Spleen (tissue), 13 donors: ENCODE measurements at regions of chr5 and their contacts with region 1.

Region 1: DNA sequence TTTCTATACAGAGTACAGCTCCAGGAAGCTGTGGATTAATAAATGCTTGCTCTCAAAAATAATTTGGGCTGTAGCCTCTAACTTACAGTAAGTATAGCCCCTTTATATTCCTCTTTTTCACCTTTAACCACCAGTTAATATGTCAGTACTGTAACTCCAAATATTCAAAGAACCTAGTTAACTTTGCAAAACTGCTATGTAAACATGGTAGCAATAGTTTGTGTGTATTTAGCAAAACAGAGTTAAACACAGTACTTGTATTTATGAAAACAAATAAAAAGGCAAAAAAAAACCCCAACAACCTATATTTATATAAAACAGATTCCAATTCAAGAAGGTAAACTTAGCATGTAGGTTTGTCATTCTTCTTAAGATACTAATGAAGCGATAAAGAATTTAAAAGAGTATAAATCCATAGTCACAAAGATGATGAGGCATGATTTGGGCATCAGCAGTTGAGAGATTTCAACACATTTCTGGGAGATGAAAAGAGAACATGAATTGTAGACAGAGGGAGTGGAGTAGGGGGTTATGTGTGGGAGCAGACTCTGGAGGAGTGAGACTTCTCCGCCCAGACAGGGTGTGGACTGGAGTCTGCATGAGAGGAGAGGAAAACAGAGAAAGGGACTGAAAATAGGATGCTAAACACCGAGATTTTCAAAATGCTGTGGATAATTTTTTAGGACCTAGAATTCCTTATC is 47.0 kb upstream of the F2RL1 start:
- DNase-seq: no peak
- H3K4me3 ChIP-seq: no peak overlapping the region
- H3K27ac ChIP-seq: no peak overlapping the region
- H3K4me1 ChIP-seq: peaks cover 0 to 7% (median 6%) of the 10 kb centered on the region in 6 donors
- H3K27me3 ChIP-seq: no peaks in the 10 kb centered on the region
- CTCF ChIP-seq: no peak
- POLR2A ChIP-seq: no peak

Region 2: GRCh38 chr5:76245590-76245989 is 526.3 kb before region 1 on chr5:
- intact Hi-C with region 1: no loop called
- DNase-seq: no peak
- H3K4me3 ChIP-seq: no peak overlapping the region
- H3K27ac ChIP-seq: no peak overlapping the region
- H3K4me1 ChIP-seq: no peaks in the 10 kb centered on the region
- H3K27me3 ChIP-seq: peaks cover 0 to 3% (median 0%) of the 10 kb centered on the region in 7 donors
- CTCF ChIP-seq: no peak
- POLR2A ChIP-seq: no peak

Region 3: DNA sequence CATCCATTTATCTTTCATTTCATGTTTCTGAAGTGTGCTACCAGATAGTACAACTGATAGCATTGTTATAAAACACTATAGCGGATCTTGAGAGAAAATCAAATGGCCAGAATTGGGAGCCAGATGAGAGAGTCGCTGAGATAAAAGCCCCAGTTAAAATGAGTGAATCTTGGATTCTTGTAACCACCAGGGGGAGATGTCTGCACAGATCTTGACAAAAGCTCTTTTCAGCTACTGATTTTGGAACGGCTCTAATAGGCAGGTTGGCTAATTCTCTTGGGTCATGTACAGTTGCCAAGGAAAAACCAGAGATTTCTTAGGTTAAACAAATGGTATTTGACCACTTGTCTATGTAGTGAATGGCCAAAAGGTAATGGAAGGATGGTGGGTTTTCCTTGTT is 170.4 kb before region 1 on chr5:
- intact Hi-C with region 1: loop called (anchors 5 kb)
- DNase-seq: no peak
- H3K4me3 ChIP-seq: no peak overlapping the region
- H3K27ac ChIP-seq: no peak overlapping the region
- H3K4me1 ChIP-seq: peaks cover 0 to 18% (median 5%) of the 10 kb centered on the region in 6 donors
- H3K27me3 ChIP-seq: no peaks in the 10 kb centered on the region
- CTCF ChIP-seq: peak; percentile 35 to 79 (median 65)
- POLR2A ChIP-seq: no peak

Region 4: DNA sequence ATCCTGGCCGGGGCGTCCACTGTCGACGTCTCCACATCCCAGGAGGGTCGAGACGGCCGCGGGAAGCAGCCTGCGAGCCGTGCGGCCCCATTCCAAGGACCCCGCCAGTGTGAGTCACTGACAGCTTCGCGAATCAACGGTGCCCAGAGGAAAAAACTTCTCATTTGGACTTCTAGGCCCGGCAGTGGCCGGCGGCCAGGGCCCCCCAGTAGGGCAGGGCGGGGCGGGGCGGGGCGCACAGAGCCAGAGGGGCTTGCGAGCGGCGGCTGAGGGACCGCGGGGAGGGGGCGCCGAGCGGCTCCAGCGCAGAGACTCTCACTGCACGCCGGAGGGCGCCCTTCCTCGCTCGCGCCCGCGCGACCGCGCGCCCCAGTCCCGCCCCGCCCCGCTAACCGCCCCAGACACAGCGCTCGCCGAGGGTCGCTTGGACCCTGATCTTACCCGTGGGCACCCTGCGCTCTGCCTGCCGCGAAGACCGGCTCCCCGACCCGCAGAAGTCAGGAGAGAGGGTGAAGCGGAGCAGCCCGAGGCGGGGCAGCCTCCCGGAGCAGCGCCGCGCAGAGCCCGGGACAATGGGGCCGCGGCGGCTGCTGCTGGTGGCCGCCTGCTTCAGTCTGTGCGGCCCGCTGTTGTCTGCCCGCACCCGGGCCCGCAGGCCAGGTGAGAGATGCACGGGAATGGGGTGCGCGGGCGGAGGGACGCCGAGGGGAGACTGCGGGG is 56.0 kb before region 1 on chr5 and contains the start of gene F2R:
- intact Hi-C with region 1: loop called (anchors 5 kb)
- DNase-seq: peak; percentile 92
- H3K4me3 ChIP-seq: peak within 1 kb of the TSS; percentile 55 to 84 (median 72)
- H3K27ac ChIP-seq: peak within 1 kb of the TSS; percentile 77 to 92 (median 89)
- H3K4me1 ChIP-seq: peaks cover 16 to 70% (median 51%) of the 10 kb centered on the region in 6 donors
- H3K27me3 ChIP-seq: peaks cover 0 to 35% (median 10%) of the 10 kb centered on the region in 7 donors
- CTCF ChIP-seq: peak in 10 of 11 experiments; percentile 5 to 80 (median 66)
- POLR2A ChIP-seq: no peak
- total RNA-seq, gene F2R: 57.3 to 128 (median 111) TPM